ENCODE measurements at regions of chr20 and their contacts with region 1.

Region 1: DNA sequence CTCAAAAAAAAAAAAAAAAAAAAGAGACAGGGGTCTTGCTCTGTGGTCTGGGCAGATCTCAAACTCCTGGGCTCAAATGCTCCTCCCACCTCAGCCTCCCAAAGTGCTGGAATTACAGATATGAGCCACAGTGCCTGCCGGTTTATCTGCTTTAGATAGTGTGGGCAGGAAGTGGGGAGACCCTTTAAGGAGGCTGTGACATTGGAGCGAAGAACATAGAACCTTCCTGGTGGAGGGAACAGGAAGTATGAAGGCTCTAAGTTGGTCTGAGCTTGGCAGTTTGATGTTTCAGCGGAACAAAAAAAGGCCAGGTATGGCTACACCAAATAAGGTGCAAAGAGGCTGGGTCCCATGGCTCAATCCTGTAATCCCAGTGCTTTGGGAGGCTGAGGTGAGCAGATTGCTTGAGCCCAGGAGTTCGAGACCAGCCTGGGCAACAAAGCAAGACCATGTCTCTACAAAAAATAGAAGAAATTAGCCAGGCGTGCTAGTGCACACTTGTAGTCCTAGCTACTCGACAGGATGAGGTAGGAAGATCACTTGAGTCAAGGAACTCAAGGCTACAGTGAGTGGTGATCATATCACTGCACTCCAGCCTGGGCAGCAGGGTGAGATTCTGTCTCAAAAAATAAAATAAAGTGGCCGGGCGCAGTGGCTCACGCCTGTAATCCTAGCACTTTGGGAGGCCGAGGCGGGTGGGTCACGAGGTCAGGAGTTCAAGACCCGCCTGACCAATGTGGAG is 8.7 kb upstream of the ZMYND8 start:
- DNase-seq: no peak
- H3K4me3 ChIP-seq: no peak overlapping the region
- H3K27ac ChIP-seq: no peak overlapping the region
- H3K4me1 ChIP-seq: peaks cover 25% of the 10 kb centered on the region
- H3K27me3 ChIP-seq: no peaks in the 10 kb centered on the region
- CTCF ChIP-seq: no peak

Region 2: DNA sequence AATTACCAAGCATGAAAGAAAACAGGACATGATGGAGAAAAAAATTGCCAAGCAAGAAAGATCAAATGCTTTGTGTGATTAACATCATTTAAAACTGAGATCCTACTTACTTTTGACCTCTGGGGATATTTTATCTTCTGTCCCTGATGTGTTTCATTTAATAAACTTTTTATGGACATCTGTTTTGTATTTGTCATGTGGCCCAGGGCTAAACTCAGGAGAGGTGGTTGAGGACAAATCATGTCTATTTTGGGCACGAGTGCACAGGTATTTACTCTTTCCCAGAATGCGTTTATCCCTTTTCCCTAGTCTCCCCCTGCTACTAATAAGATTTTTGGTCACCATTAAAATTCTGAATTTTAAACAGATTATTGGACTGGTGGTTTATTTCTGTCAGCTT is 264.7 kb after region 1 on chr20:
- CTCF ChIA-PET with region 1: no interaction called
- POLR2A ChIA-PET with region 1: interaction called, 22 read pairs
- intact Hi-C with region 1: no loop called
- DNase-seq: no peak
- H3K4me3 ChIP-seq: no peak overlapping the region
- H3K27ac ChIP-seq: no peak overlapping the region
- H3K4me1 ChIP-seq: no peaks in the 10 kb centered on the region
- H3K27me3 ChIP-seq: no peaks in the 10 kb centered on the region
- CTCF ChIP-seq: no peak

Region 3: DNA sequence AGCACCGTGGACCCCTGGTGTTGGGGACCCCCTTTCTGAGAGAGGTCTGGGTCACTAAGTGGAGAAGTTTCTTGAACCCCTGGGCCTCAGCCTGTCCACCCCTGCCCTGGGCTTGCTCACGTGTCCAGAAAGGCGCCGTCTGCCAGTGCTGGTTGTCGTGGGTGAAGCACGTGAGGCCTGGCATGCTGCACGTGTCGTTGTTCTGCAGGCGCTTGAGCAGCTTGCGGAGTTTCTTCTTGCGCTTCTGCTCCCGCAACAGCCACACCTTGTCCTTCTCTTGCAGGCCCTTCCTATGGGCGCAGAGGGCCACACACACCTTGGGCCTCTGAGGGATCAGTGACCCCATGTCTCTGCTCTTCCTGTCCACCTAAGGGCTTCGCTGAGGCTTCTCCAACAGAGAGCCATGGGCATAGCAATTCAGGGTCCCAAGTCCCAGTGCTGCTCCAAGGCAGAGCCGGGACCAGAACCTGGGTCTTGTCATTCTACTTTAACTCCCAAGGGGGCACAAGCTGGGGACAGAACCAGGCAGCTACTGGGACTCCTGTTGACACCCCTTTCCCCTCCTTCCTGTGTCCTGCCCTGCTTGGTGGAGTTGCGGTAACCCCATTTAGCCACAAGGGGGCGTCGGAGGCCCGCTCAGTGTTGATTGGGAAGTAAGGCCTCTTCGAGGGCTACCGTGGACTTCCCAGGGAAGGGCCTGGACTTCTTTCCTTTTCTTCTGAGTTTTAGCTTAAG is 298.3 kb after region 1 on chr20:
- CTCF ChIA-PET with region 1: no interaction called
- POLR2A ChIA-PET with region 1: no interaction called
- intact Hi-C with region 1: no loop called
- DNase-seq: peak; percentile 73 to 87
- H3K4me3 ChIP-seq: no peak overlapping the region
- H3K27ac ChIP-seq: 0 out of 2 replicates have a peak overlapping the region, but pooled peaks have one; percentile 6
- H3K4me1 ChIP-seq: no peaks in the 10 kb centered on the region
- H3K27me3 ChIP-seq: no peaks in the 10 kb centered on the region
- CTCF ChIP-seq: peak; percentile 98